GM12878 (cell line): ENCODE measurements at regions of chr6 and their contacts with region 1.

Region 1: DNA sequence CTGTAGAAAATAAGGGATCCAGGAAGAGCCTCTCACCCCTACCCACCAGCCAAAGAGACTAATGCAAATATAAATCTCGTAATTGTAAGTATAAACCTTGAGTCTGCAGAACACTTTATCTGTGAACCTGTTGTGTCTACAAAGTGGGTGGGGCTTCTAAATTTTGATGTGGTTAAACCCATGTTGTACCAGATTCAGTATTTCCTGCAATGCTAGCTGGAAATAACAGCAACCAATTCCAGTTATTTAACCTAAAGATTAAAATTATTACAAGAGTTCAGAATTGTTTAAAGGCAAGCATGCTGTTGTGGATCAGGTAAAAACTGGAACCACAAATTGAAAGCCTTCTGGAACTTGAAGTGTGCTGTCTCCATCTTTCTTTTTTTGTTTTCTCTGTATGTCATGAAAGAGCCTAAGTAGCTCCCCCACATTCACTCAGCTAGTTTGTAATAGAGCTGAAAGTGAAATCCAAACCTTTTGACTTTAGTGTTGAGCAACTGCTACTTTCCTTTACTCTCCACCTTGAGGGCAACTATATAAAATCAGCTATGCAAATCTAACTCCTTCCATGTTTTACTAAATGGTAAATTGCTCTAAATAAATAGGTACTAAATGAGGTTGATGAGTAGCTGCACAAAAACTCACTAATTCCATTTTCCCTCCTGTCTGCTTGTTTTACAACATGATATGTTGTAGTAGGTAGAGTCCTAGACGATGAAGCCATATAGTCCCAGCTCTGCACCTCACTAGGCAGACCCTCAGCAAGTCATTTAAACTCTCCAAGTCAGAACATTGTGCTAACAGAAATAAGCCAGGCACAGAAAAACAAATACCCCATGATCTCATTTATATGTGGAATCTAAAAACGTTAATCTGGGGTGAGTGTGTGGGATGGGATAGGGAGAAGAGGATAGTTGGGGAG is 17.9 kb upstream of the THEMIS start:
- DNase-seq: no peak
- ATAC-seq: peak; percentile 50
- H3K4me3 ChIP-seq: no peak overlapping the region
- H3K27ac ChIP-seq: no peak overlapping the region
- H3K4me1 ChIP-seq: no peaks in the 10 kb centered on the region
- H3K27me3 ChIP-seq: no peaks in the 10 kb centered on the region
- CTCF ChIP-seq: no peak
- EP300 ChIP-seq: no peak
- POLR2A ChIP-seq: no peak
- RAD21 ChIP-seq: no peak

Region 2: DNA sequence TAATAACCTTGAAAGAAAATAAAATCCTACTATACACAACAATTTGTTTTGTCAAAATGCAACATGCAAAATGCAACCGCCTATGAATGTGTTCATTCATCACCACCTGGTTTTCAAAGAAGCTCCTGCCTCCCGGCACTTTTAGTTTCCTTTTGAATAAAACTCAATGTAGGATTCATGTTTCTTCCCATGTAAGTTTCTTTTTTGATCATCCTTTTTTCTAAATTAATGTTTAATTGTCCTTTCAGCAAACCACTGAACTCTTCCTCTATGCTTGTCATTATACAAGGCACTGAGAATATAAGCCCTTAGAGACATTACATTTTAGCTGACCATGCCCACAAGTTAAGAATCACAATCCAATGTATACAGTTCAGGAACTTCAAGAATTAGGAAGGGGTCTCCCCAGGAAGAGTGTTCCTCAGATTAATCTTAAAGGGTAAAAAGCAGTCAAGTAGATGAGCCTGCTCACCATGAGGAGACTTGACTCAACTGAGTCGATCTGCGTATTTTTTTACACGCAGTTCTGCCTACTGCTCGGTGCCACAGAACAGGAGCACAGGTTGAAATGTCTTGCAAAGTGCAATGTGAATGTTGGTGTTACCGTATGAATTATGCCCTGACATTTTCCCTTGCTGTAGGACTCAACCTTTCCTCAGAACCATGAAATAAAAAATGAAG is 10.7 kb before region 1 on chr6:
- CTCF ChIA-PET with region 1: no interaction called
- POLR2A ChIA-PET with region 1: no interaction called
- RAD21 ChIA-PET with region 1: no interaction called
- SMC1A ChIA-PET with region 1: interaction called, 14 read pairs
- in situ Hi-C with region 1: no loop called
- intact Hi-C with region 1: no loop called
- DNase-seq: peak; percentile 21
- ATAC-seq: peak; percentile 89
- H3K4me3 ChIP-seq: 0 out of 2 replicates have a peak overlapping the region, but pooled peaks have one; percentile 21
- H3K27ac ChIP-seq: no peak overlapping the region
- H3K4me1 ChIP-seq: no peaks in the 10 kb centered on the region
- H3K27me3 ChIP-seq: no peaks in the 10 kb centered on the region
- CTCF ChIP-seq: no peak
- EP300 ChIP-seq: 0 out of 4 replicates have a peak, but pooled peaks of 1 of the 2 experiments have one; percentile 31
- POLR2A ChIP-seq: no peak
- RAD21 ChIP-seq: no peak